RWPE1 (cell line): ENCODE measurements at regions of chr5 and their contacts with region 1.

Region 1: DNA sequence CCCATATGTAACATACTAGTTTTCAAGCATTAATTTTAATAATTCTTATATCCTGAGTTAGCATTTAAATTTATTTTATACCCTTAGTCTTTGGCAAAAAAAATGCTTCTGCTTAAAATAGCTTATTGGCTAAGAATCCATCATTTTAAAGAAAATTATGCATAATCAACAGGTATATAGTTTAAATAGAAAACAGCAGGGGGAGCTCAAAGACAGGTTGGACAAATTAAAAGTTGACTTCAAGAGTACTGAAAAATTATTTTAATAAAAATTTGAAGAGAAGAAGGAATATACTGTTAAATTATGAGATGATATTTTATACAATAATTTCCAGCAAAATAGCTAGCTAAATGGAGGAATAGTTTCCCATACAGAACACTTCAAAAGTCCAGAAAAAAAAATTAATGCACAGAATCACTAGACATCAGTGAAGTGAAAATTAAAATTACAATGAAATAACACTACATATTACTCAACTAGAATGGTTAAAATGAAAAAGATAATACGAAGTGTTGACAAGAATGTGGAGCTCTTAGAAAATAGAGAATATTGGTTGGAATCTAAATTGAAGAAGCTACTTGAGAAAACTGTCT is 387.1 kb downstream of the PDE4D start:
- DNase-seq: peak; percentile 40
- H3K27ac ChIP-seq: no peak overlapping the region
- CTCF ChIP-seq: peak; percentile 77

Region 2: GRCh38 chr5:59466271-59466670 is 40.1 kb before region 1 on chr5:
- CTCF ChIA-PET with region 1: no interaction called
- POLR2A ChIA-PET with region 1: no interaction called
- DNase-seq: no peak
- H3K27ac ChIP-seq: no peak overlapping the region
- CTCF ChIP-seq: no peak

Region 3: DNA sequence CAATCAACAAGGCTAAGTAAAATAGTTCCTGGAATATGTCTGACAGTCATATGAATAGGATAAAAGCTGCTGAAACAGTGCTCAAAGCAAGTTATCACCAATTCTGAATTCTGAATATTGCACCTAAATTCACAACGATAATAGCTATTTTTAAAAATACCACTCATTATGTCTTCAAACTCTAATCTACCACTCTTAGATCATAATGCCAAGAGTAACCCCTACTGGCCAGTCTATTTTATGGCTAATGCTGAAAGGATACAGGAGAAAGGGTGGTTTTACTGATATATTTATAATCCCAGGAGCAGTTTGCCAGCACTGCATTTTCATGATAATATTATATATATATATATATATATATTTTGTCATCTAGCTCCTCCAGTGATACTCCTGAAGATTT is 154.4 kb after region 1 on chr5:
- CTCF ChIA-PET with region 1: interaction called, 14 read pairs
- POLR2A ChIA-PET with region 1: no interaction called
- DNase-seq: peak; percentile 46
- H3K27ac ChIP-seq: no peak overlapping the region
- CTCF ChIP-seq: 0 out of 2 replicates have a peak, but pooled peaks have one; percentile 18

Region 4: GRCh38 chr5:59673438-59674058 is 167.2 kb after region 1 on chr5:
- CTCF ChIA-PET with region 1: interaction called, 40 read pairs
- POLR2A ChIA-PET with region 1: no interaction called
- DNase-seq: peak; percentile 48
- H3K27ac ChIP-seq: no peak overlapping the region
- CTCF ChIP-seq: peak; percentile 93

Region 5: DNA sequence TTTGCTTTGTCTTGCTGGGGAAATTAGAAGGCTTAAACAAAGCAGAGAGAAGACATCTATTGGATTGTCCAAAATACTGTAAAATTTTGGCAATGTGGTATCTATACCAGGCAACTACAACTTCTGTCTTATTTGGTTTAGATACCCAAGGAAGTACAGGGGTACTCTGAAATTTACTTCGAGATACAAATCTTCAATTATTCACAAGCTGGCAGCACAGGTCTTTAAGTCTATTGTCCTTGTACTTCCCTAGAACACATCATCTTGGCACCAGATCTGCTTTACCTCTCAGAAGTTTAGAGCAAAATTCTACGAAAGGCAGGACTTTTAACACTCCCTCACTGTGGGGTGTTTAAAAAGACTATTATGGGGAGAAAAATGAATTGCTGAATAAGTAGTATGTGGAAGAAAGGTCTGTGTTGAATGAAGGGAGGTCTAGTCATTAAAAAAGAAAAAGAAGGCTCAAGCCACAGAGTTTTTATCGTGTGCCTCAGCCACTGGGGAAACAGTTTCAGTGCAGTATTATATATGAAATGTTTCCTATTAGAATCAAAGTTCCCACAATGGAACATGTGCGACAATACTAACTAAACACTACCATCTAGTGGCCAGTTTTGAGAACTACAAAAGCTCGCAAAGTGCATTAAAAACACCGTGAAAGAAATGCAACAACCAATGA is 293.4 kb after region 1 on chr5:
- CTCF ChIA-PET with region 1: interaction called, 24 read pairs
- POLR2A ChIA-PET with region 1: no interaction called
- DNase-seq: peak; percentile 54
- H3K27ac ChIP-seq: no peak overlapping the region
- CTCF ChIP-seq: peak; percentile 79